GM10248 (cell line): ENCODE measurements at regions of chr17 and their contacts with region 1.

Region 1: DNA sequence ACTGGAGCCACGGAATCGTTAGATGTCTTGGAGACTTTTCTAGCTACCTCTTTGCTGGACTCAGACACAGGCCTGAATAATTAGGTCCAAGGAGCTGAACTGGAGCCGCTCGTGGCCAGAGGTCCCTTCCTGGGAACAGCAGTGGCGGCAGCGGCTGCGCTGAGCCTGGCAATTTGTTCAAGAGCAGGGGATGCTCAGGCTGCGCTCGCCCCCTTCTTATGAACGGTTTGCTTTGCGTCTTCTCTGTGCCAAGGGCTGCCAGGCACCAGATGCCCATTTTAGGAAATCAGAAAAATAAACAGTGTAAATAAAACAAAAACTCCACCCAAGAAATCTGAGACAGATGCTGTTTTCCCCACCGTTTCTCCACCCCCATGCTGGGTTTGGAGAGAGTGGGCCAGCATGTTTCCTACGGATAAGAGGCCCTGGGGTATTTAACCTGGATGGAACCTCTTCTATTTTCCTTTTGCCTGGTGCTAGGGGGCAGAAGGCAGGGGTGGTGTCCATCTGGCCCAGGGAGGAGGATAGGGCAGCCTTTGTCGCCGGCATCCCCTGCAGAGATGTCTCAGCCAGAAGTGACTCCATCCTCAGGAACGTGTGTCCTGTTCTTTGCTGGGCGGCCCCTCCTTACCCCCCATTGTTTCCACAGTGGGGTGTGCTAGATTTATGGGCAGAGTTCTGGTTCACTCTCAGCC is 163.4 kb downstream of the SEC14L1 start:
- DNase-seq: no peak
- CTCF ChIP-seq: no peak

Region 2: GRCh38 chr17:77217566-77217965 is 86.6 kb before region 1 on chr17:
- CTCF ChIA-PET with region 1: no interaction called
- POLR2A ChIA-PET with region 1: interaction called, 10 read pairs
- DNase-seq: no peak
- CTCF ChIP-seq: no peak

Region 3: GRCh38 chr17:77354420-77355241 is 50.4 kb after region 1 on chr17:
- CTCF ChIA-PET with region 1: no interaction called
- POLR2A ChIA-PET with region 1: no interaction called
- DNase-seq: peak; percentile 8
- CTCF ChIP-seq: no peak